Caki2 (cell line): ENCODE measurements at regions of chr3 and their contacts with region 1.

Region 1: DNA sequence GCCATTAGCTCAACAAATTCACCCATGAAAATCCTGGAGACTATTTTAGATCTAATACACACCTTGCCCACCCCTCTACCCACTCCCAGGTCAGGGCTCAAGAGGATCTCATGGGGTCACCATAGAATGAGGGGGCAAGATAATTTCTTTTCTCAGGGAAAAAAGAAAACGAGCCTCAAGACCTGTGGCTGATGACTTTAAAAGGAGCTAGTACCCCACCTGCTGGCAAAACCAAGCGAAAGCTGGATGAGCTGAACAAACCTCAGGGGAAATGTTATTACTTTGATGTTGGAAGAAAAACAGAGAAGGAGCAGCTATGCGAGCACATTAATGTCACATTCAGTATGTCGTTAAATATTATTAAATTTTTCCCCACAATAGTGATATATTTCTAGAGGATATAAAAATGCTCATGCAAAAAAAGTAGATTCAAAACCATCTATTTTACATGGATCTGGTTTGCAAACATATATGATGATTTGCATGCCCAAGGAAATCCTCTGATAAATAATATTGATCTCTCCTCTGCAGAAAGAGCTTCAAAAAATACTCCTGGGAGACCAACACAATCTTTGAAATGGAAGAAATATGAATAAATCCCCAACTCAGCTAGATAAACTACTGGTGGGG is 37.7 kb downstream of the PLD1 start:
- DNase-seq: peak; percentile 65

Region 2: DNA sequence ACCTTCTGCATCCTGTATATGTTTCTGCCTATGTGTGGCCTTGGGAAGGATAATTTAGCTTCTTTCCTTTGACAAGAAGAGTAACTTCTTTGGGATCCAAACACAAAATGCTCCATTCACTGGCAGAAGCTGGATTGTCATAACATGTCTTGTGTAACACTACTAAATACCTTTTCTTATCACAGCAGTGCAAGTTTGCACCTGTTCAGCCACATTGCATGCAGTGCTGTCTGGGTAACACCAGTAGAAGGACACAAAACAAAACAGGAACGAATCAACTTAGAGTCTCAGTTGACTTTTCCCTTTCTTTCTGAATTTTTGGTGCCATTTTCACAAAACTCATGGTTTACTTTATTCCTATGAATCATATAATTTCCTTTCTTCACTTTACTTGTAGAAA is 268.7 kb before region 1 on chr3:
- in situ Hi-C with region 1: no loop called
- DNase-seq: no peak

Region 3: GRCh38 chr3:171620825-171621434 is 151.6 kb before region 1 on chr3:
- in situ Hi-C with region 1: no loop called
- DNase-seq: peak; percentile 88

Region 4: GRCh38 chr3:171712171-171712938 is 60.2 kb before region 1 on chr3:
- in situ Hi-C with region 1: no loop called
- DNase-seq: peak; percentile 35

Region 5: GRCh38 chr3:171736556-171736955 is 36.0 kb before region 1 on chr3:
- in situ Hi-C with region 1: loop called (anchors 5 kb)
- DNase-seq: no peak